ENCODE measurements at regions of chr19 and their contacts with region 1.

Region 1: DNA sequence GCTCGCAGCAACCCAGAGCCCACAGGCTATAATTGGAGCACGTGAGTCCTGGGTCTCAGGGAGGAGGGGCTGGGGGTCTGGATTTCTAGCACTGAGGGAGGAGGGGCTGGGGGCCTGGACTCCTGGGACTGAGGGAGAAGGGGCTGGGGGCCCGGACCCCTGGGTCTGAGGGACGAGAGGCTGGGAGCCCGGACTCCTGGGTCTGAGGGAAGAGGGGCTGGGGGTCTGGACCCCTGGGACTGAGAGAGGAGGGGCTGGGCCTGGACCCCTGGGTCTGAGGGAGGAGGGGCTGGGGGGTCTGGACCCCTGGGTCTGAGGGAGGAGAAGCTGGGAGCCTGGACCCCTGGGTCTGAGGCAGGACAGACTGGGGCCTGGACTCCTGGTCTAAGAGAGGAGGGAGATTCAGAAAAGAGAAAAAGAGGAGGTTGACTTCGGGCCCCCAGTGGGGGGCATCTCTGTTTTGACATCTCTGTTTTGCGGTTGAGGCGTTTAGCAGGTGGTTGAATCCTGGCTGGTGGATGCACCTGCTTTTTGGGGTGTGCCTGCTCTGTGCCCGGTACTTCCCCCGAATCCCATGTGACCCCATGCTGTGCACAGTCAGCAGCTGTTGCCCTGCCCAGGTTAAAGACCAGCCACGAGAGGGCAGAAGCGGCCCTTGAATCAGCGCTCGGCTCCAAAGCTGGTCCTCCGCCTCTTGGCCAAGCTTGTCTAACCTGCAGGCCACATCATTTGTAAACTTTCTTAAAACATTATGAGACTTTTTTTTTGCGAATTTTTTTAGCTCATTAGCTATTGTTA is 10.5 kb downstream of the PVR start:
- DNase-seq: peak; percentile 94
- ATAC-seq: peak; percentile 97
- H3K4me3 ChIP-seq: no peak overlapping the region
- H3K4me3 Mint-ChIP-seq: no peak overlapping the region
- H3K27ac ChIP-seq: peak overlapping the region; percentile 52 to 65
- H3K27ac Mint-ChIP-seq: peak overlapping the region; percentile 80
- H3K4me1 ChIP-seq: peaks cover 7 to 18% of the 10 kb centered on the region in 2 donors
- H3K4me1 Mint-ChIP-seq: peaks cover 18% of the 10 kb centered on the region
- H3K27me3 ChIP-seq: no peaks in the 10 kb centered on the region
- H3K27me3 Mint-ChIP-seq: peaks cover 6% of the 10 kb centered on the region
- CTCF ChIP-seq: peak; percentile 79

Region 2: GRCh38 chr19:44500148-44500956 is 153.8 kb before region 1 on chr19 and contains the start of gene ZNF180:
- CTCF ChIA-PET with region 1: no interaction called
- POLR2A ChIA-PET with region 1: no interaction called
- intact Hi-C with region 1: loop called (anchors 5 kb)
- DNase-seq: peak; percentile 98
- ATAC-seq: peak; percentile 93
- H3K4me3 ChIP-seq: peak within 1 kb of the TSS; percentile 70 to 99 (median 93)
- H3K4me3 Mint-ChIP-seq: peak within 1 kb of the TSS; percentile 99
- H3K27ac ChIP-seq: peak within 1 kb of the TSS; percentile 52 to 84
- H3K27ac Mint-ChIP-seq: peak within 1 kb of the TSS; percentile 92
- H3K4me1 ChIP-seq: peaks cover 13 to 25% of the 10 kb centered on the region in 2 donors
- H3K4me1 Mint-ChIP-seq: peaks cover 29% of the 10 kb centered on the region
- H3K27me3 ChIP-seq: peaks cover 0 to 5% (median 2%) of the 10 kb centered on the region in 4 experiments
- H3K27me3 Mint-ChIP-seq: peaks cover 14% of the 10 kb centered on the region
- CTCF ChIP-seq: peak; percentile 56
- total RNA-seq, gene ZNF180: 16.1 and 19.6 TPM in 2 replicates

Region 3: DNA sequence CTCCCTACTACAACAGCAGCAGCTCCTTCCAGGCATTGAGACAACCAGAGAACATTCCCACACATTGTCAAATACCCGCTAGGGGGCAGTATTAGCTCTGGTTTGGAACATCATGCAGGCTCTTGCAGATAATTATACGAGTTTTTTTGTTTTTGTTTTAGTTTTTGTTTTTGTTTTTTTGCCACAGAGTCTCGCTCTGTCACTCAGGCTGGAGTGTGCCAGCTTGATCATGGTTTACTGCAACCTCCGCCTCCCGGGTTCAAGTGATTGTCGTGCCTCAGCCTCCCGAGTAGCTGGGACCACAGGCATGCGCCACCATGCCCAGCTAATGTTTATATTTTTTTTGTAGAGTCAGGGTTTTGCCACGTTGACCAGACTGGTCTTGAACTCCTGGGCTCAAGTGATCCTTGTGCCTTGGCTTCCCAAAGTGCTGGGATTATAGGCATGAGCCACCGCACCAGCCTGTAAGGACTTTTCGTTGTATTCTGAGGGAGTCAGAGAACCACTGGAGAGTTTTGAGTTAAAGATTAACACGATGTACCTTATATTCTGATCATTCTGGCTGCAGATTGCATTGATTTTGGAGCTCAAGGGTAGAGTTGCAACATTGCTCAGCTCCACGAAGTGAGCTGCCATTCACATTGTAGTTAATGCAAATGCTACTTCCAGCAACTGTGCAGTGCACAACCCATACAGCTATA is 83.0 kb before region 1 on chr19:
- CTCF ChIA-PET with region 1: interaction called, 10 read pairs
- POLR2A ChIA-PET with region 1: no interaction called
- intact Hi-C with region 1: loop called (anchors 1 kb)
- DNase-seq: peak; percentile 65
- ATAC-seq: no peak
- H3K4me3 ChIP-seq: no peak overlapping the region
- H3K4me3 Mint-ChIP-seq: no peak overlapping the region
- H3K27ac ChIP-seq: no peak overlapping the region
- H3K27ac Mint-ChIP-seq: no peak overlapping the region
- H3K4me1 ChIP-seq: no peaks in the 10 kb centered on the region
- H3K4me1 Mint-ChIP-seq: no peaks in the 10 kb centered on the region
- H3K27me3 ChIP-seq: peaks cover 0 to 2% (median 0%) of the 10 kb centered on the region in 4 experiments
- H3K27me3 Mint-ChIP-seq: peaks cover 21% of the 10 kb centered on the region
- CTCF ChIP-seq: peak; percentile 69

Region 4: GRCh38 chr19:44746946-44747738 is 93.0 kb after region 1 on chr19:
- CTCF ChIA-PET with region 1: interaction called, 5 read pairs
- POLR2A ChIA-PET with region 1: no interaction called
- intact Hi-C with region 1: loop called (anchors 1 kb)
- DNase-seq: peak; percentile 89
- ATAC-seq: peak; percentile 67
- H3K4me3 ChIP-seq: peak overlapping the region; percentile 58 to 95 (median 81)
- H3K4me3 Mint-ChIP-seq: peak overlapping the region; percentile 95
- H3K27ac ChIP-seq: peak overlapping the region; percentile 84 to 89
- H3K27ac Mint-ChIP-seq: peak overlapping the region; percentile 93
- H3K4me1 ChIP-seq: peaks cover 42 to 56% of the 10 kb centered on the region in 2 donors
- H3K4me1 Mint-ChIP-seq: peaks cover 51% of the 10 kb centered on the region
- H3K27me3 ChIP-seq: no peaks in the 10 kb centered on the region
- H3K27me3 Mint-ChIP-seq: no peaks in the 10 kb centered on the region
- CTCF ChIP-seq: no peak

Region 5: DNA sequence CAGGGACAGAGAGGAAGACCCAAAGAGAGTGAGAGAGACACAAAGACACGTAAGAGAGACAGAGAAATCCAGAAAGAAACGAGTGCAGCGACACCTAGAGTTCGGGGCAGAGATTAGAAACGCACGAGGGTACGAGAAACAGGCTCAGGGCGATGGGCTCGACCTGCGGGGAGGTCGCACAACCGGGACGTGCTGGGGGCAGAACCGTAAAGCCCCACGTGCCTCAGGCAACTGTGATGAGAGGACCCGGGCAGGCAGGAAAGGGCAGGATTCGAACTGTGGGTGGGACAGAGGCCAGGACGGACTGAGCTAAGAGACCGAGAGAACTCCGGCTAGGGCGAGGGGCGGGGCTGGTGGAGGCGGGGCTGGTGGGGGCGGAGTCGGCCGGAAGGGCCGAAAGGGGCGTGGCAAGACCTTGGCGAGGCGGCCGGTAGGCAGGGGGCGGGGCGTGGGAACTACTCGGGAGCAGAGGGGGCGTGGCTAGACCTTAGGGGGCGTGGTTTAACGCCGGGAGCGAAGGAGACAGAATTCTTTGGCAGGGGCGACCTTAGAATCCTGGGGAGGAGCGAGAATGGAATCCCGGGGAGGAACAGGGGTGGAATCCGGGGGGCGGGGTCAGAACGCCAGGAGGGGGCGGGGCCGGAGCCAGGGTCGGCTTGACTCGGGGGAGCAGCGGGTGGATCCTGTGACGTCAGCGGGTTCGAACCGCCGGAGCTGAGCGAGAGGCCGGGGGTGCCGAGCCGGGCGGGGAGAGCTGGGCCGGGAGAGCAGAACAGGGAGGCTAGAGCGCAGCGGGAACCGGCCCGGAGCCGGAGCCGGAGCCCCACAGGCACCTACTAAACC is 191.7 kb after region 1 on chr19 and contains the start of gene NECTIN2:
- CTCF ChIA-PET with region 1: interaction called, 7 read pairs
- POLR2A ChIA-PET with region 1: no interaction called
- intact Hi-C with region 1: loop called (anchors 10 kb)
- DNase-seq: peak; percentile 79
- ATAC-seq: peak; percentile 64
- H3K4me3 ChIP-seq: peak within 1 kb of the TSS; percentile 19 to 64 (median 47)
- H3K4me3 Mint-ChIP-seq: peak within 1 kb of the TSS; percentile 83
- H3K27ac ChIP-seq: no peak within 1 kb of the TSS
- H3K27ac Mint-ChIP-seq: peak within 1 kb of the TSS; percentile 20
- H3K4me1 ChIP-seq: peaks cover 35% of the 10 kb centered on the region in 2 donors
- H3K4me1 Mint-ChIP-seq: peaks cover 22% of the 10 kb centered on the region
- H3K27me3 ChIP-seq: peaks cover 0 to 44% (median 19%) of the 10 kb centered on the region in 4 experiments
- H3K27me3 Mint-ChIP-seq: peaks cover 38% of the 10 kb centered on the region
- CTCF ChIP-seq: no peak
- total RNA-seq, gene NECTIN2: 0.32 TPM in 1 of 2 replicates, not detected in the other

Region 6: GRCh38 chr19:44883922-44884321 is 229.7 kb after region 1 on chr19:
- CTCF ChIA-PET with region 1: no interaction called
- POLR2A ChIA-PET with region 1: no interaction called
- intact Hi-C with region 1: no loop called
- DNase-seq: no peak
- ATAC-seq: no peak
- H3K4me3 ChIP-seq: no peak overlapping the region
- H3K4me3 Mint-ChIP-seq: no peak overlapping the region
- H3K27ac ChIP-seq: no peak overlapping the region
- H3K27ac Mint-ChIP-seq: no peak overlapping the region
- H3K4me1 ChIP-seq: no peaks in the 10 kb centered on the region
- H3K4me1 Mint-ChIP-seq: peaks cover under 1% of the 10 kb centered on the region
- H3K27me3 ChIP-seq: no peaks in the 10 kb centered on the region
- H3K27me3 Mint-ChIP-seq: peaks cover 13% of the 10 kb centered on the region
- CTCF ChIP-seq: no peak

Measured in B cell (primary cell).